ENCODE measurements at regions of chr1 and their contacts with region 1.

Region 1: GRCh38 chr1:15571266-15571665 is 13.6 kb downstream of the AGMAT start:
- DNase-seq: peak; percentile 55
- H3K4me3 ChIP-seq: peak overlapping the region; percentile 51
- H3K27ac ChIP-seq: peak overlapping the region; percentile 94
- H3K4me1 ChIP-seq: peaks cover 39% of the 10 kb centered on the region
- CTCF ChIP-seq: no peak

Region 2: DNA sequence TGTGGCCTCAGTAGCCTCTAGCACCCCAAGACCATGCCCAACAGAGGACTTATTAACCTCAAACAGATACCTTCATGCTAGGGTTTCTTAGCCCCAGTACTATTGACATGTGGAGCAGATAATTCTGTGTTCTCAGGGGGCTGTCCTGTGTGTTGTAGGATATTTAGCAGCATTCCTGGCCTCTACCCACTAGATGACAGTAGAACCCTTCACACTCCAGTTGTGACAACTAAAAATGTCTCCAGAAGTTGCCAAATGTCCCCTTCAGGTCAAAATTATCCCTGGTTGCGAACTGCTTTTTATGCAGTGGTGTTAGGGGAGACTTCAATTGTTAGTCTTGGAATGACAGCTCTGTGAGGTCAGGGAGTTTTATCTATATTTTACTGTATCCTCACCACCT is 964.6 kb before region 1 on chr1:
- CTCF ChIA-PET with region 1: no interaction called
- POLR2A ChIA-PET with region 1: no interaction called
- intact Hi-C with region 1: no loop called
- DNase-seq: peak; percentile 71
- H3K4me3 ChIP-seq: no peak overlapping the region
- H3K27ac ChIP-seq: no peak overlapping the region
- H3K4me1 ChIP-seq: peaks cover 11% of the 10 kb centered on the region
- CTCF ChIP-seq: peak; percentile 90

Region 3: DNA sequence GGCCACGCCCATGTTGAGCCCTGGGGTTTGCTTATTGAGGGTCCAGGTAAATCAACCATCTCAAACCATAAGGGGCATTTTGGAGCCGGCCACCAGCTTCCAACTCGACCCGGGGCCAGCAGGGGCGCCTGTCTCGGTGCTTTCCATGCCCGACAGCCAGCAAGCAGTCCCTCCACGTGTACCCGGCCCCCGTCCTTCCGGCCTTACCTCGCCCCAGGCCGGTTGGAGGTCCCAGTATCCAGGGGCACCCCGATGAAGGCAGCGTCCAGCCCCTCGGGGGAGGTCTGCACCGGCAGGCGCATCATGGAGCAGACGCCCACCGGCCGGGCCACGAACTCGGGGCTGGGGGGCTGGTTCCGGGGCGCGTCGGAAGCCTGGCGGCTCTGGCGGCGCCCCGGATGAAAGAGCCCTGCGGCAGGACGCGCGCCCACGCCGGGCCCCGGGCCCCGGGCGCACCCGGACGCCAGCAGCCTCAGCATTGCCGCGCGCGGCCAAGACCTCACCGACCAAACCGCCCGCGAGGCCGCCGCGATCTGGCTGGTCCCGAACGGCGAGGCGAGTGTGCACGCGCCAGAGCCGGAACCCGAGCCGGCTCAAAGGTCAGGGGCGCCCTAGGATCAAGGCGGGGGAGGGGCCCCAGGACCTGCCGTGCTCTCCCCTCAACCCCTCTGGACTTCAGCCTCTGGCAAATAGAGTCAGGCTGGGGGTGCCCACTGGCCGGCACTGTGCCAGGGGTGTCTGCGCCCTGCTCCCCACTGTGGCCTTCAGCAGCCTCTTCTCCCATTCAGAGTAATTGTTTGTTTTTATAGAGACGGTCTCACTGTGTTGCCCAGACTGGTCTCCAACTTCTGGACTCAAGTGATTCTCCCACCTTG is 13.5 kb after region 1 on chr1 and contains the start of gene AGMAT:
- CTCF ChIA-PET with region 1: no interaction called
- POLR2A ChIA-PET with region 1: interaction called, 11 read pairs
- intact Hi-C with region 1: no loop called
- DNase-seq: peak; percentile 41
- H3K4me3 ChIP-seq: peak within 1 kb of the TSS; percentile 52
- H3K27ac ChIP-seq: no peak within 1 kb of the TSS
- H3K4me1 ChIP-seq: peaks cover 9% of the 10 kb centered on the region
- CTCF ChIP-seq: peak; percentile 29; the same call in 1 of the 2 replicates
- total RNA-seq, gene AGMAT: 0.15 and 0.54 TPM in 2 replicates

Region 4: DNA sequence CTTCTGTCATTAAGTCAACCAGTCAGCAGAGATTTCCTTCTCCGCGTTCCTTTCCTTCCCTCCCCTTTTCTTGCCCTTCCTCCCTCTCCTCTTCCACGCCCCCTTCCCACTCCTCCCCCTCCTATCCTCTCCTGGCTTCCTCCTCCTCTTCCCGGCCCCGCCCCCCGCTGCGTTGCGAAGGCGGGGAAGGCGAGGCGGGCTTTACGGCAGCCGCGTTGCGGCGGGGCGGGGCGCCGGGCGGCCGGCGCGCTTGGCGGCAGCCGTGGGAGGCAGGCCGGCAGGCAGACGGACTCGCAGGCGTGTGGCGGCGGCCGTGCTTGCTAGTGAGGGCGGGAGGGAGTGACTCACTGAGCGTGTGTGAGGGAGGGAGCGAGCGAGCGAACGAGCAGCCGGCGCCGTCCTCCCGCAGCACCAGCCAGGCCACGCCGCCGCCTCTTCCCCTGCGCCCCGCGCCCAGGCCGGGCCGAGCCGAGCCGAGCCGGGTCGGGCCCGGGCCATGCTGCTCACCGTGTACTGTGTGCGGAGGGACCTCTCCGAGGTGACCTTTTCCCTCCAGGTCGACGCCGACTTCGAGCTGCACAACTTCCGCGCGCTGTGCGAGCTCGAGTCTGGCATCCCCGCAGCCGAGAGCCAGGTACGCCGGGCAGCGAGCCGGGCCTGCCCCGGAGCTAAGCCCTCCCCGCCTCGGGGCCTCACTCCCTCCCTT is 46.1 kb after region 1 on chr1 and contains the start of gene DDI2:
- CTCF ChIA-PET with region 1: no interaction called
- POLR2A ChIA-PET with region 1: interaction called, 3 read pairs
- intact Hi-C with region 1: loop called (anchors 1 kb)
- DNase-seq: peak; percentile 92
- H3K4me3 ChIP-seq: peak within 1 kb of the TSS; percentile 99
- H3K27ac ChIP-seq: peak within 1 kb of the TSS; percentile 71
- H3K4me1 ChIP-seq: peaks cover 28% of the 10 kb centered on the region
- CTCF ChIP-seq: no peak
- total RNA-seq, gene DDI2: 23.5 and 29.6 TPM in 2 replicates

Measured in OCI-LY7 (cell line).